Activated CD4-positive, alpha-beta T cell treated with anti-CD3 and anti-CD28 coated beads for 36 hours (primary cell): ENCODE measurements at regions of chr10 and their contacts with region 1.

Region 1: DNA sequence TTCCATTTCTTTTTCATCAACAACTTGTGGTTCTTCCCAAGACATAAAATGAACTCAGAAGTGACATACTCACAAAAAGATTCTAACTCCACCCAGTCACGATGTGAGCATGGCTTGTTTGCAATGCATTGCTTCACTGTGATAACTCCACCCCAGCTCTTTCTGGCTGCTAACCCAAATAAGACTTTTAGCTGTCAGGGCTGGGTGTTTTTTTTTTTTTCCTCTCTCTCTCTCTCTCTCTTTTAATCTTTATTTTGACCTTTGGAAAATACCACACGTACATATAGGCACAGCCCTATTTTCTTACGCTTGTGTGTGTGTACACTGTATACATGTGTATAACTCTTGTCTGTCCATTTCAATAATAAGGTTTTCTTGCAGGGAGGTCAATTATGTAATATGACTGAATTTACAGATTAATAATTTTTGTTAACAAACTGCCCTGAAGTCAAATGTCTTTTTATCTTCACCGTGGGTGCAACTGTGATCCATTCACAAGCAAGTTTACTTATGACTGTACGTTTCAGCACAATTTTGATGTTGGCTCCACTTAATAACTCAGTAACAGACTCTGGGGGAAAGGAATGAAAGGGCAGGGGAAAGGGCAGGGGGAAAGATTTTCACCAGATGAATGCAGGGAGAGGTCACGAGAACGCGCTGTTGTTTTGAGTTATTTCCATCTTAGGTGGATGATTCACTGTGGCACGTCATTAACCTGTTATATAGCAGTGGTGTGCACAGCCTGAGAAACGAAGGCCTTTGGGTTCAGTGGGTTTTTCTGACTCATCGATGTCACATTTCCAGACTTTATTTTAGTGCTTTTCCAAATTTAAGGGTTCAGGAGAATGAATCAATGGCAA is 49.1 kb downstream of the APBB1IP start:
- DNase-seq: peak; percentile 83
- ATAC-seq: peak; percentile 80
- H3K4me3 Mint-ChIP-seq: peak overlapping the region; percentile 61
- H3K27ac Mint-ChIP-seq: peak overlapping the region; percentile 97
- H3K4me1 Mint-ChIP-seq: peaks cover 72% of the 10 kb centered on the region
- H3K27me3 Mint-ChIP-seq: no peaks in the 10 kb centered on the region

Region 2: GRCh38 chr10:26357203-26357602 is 130.0 kb before region 1 on chr10:
- CTCF ChIA-PET with region 1: no interaction called
- POLR2A ChIA-PET with region 1: no interaction called
- intact Hi-C with region 1: loop called (anchors 1 kb)
- DNase-seq: peak; percentile 16
- ATAC-seq: peak; percentile 97
- H3K4me3 Mint-ChIP-seq: no peak overlapping the region
- H3K27ac Mint-ChIP-seq: peak overlapping the region; percentile 9
- H3K4me1 Mint-ChIP-seq: peaks cover 13% of the 10 kb centered on the region
- H3K27me3 Mint-ChIP-seq: no peaks in the 10 kb centered on the region

Region 3: DNA sequence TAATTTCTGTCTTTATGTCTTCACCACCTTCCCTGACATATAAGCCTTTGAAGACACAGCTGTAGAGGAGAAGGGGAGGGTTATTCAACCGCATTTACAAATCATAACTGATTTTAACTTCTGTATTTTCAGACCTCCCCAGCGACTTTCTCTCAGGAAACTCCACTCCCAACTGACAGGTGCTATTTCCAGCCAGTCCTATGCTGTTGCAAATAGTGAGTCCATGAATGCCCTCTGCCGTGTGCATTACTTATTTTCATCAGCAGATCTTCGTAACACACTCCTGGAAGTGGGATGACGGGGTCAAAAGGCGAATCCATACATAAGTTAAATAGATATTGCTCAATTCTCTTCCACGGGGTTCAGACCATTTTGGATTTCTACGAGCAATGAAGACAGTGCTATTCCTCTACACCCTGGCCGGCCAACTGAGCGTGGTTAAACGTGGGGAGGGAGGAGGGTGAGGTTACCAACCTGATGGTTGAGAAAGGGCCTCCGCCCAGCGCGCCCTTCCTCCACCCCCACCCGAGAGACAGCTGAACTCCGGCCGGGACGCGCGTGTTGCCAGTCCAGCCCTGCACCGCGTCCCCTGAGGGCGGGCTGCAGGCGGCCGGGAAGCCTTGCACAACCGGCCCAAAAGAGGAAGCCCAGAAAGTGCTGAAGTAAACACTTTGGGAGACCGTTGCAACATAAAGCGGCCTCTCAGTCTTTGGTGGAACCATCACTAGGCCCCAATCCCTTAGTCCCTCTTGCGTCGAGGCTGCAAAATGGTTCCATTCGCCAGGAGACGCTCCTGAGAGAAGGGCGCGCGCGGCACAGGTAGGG is 49.4 kb before region 1 on chr10 and contains the start of gene APBB1IP:
- CTCF ChIA-PET with region 1: no interaction called
- POLR2A ChIA-PET with region 1: interaction called, 6 read pairs
- intact Hi-C with region 1: loop called (anchors 2 kb)
- DNase-seq: peak; percentile 73
- ATAC-seq: peak; percentile 56
- H3K4me3 Mint-ChIP-seq: peak within 1 kb of the TSS; percentile 89
- H3K27ac Mint-ChIP-seq: peak within 1 kb of the TSS; percentile 97
- H3K4me1 Mint-ChIP-seq: peaks cover 49% of the 10 kb centered on the region
- H3K27me3 Mint-ChIP-seq: no peaks in the 10 kb centered on the region
- total RNA-seq, gene APBB1IP: 53.3 to 66.4 TPM

Region 4: DNA sequence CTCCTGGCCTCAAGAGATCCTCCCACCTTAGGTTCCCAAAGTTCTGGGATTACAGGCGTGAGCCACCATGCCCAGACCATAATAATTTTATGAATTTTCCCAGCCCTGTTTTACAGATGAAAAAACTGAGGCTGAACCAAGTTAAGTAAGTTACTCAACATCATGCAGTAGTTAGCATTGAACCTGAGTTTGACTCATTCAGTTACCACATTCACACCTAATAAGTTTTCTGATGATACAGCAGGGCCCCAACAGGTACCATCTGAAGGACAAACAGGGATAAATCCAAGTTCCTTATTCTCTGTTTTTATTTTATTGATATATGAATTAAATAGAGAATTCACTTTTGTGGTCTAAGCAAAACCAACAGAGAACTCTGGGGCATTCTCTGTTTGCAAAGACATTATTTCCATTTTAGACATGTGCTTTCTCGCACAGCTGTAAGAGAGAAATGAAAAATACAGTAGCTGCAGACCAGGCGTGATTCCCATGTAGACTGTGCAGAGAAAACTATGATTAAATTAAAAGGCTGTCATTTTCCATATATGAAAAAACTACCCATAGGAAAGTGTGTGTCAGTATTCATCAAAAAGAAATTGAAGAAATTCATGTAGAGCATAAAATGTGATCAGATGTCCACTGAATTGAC is 22.5 kb before region 1 on chr10:
- CTCF ChIA-PET with region 1: interaction called, 3 read pairs
- POLR2A ChIA-PET with region 1: no interaction called
- intact Hi-C with region 1: loop called in 1 of 2 experiments (anchors 1 kb)
- DNase-seq: no peak
- ATAC-seq: peak; percentile 31
- H3K4me3 Mint-ChIP-seq: no peak overlapping the region
- H3K27ac Mint-ChIP-seq: no peak overlapping the region
- H3K4me1 Mint-ChIP-seq: peaks cover 78% of the 10 kb centered on the region
- H3K27me3 Mint-ChIP-seq: no peaks in the 10 kb centered on the region

Region 5: DNA sequence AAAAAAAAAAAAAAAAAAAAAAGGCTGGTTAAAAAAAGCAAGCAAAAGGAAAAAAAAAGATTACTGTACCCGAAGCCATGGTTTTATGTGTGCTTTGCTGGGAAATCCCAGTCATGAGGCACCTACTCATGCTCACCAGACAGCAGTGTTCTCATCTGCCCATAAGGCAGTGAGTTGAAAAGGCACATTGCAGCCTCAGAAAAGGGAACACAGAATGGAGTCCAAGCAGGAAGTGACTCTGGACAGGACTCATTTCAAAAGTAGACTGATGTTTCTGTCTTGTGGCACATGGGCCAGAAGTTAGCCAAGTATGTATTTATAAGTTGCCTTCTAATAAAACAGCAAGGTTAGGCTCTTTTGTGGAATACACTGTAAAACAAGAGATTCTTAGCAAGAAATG is 250.5 kb after region 1 on chr10:
- CTCF ChIA-PET with region 1: no interaction called
- POLR2A ChIA-PET with region 1: no interaction called
- intact Hi-C with region 1: loop called in 1 of 2 experiments (anchors 1 kb)
- DNase-seq: peak; percentile 72
- ATAC-seq: peak; percentile 89
- H3K4me3 Mint-ChIP-seq: no peak overlapping the region
- H3K27ac Mint-ChIP-seq: peak overlapping the region; percentile 96
- H3K4me1 Mint-ChIP-seq: peaks cover 47% of the 10 kb centered on the region
- H3K27me3 Mint-ChIP-seq: no peaks in the 10 kb centered on the region

Region 6: DNA sequence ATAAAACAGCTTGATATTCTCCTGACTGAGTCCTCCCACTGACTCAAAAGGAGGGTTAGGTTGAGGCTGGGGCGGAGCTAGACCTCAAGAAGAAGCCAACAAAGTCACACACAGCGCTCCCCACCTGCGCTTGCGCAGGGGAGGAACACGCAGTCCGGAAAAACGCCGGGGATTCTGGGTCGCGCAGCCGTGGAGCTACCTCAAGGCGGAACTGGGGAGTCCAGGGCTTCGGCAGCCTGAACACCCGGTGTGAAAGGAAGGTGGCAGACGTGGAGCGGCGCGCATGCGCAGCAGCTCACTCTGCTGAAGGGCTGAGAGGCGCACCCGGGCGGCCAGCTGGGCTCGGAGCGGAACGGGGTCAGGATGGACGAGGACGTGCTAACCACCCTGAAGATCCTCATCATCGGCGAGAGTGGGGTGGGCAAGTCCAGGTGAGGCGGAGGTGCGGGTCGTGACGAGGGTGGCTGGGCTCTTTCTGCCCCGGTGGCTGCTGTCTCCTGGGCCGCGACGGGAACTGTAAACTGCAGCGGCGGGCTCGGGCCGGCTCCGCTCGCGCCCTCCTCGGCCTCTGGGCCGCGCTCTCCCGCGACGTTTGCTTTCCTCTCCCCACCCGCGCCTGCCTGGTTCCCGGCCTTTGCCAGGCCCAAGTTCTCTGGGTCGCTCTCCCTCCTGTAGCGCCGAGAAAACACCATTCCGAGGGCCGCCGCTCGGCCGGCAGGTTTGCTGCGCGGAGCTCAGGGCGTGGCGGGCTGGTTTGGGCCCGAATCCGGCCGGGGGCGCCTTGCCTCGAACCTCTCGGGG is 1017.0 kb after region 1 on chr10 and contains the start of gene RAB18:
- CTCF ChIA-PET with region 1: no interaction called
- POLR2A ChIA-PET with region 1: no interaction called
- intact Hi-C with region 1: loop called in 1 of 2 experiments (anchors 10 kb)
- DNase-seq: peak; percentile 99
- ATAC-seq: peak; percentile 98
- H3K4me3 Mint-ChIP-seq: peak within 1 kb of the TSS; percentile 93
- H3K27ac Mint-ChIP-seq: peak within 1 kb of the TSS; percentile 93
- H3K4me1 Mint-ChIP-seq: peaks cover 46% of the 10 kb centered on the region
- H3K27me3 Mint-ChIP-seq: no peaks in the 10 kb centered on the region
- total RNA-seq, gene RAB18: 44.6 to 49.3 TPM